ENCODE measurements at regions of chr15 and their contacts with region 1.

Region 1: DNA sequence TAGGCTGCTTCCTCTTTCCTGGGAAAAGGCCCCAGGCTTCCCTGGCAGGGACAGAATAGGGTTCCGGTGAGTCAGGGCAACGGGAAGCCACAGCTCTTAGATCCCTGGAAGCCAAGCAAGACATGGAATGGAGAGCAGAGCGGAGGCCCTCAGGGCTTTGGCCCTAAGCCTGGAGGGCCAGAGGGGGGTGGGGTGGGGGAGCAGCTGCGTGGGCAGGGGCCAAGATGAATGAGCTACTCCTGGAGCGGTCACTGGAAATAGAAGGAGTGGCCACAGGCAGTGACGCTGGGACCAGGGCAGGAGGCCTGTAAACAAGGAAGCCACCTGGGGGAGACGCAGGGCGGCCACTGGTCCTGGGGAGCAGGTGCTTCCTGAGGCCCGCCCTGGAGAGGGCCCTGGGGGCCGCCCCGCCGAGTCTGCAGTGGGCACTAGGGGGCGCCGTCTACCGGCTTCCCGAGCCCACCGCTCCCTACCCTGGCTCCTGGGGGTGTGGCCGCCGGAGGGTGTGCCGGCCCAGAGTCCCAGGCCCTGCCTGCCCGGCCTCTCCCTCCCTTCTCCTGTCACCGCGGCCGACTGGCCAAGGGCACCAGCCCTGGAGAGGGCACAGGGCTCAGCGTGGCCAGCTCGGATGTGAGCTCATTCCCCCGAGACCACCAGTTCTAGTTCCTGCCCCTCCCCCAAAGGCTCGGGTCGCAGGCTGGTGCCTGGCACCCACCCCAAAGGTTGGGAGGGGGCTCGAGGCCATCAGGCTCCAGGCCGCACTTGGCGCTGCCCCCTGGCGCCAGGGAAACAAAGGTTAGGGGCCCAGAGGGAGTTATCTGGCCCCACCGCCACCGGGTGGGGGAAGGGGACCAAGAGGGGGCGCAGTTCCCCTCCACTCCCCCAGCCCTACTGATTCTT is 12.1 kb downstream of the VPS18 start:
- DNase-seq: peak; percentile 91
- ATAC-seq: peak; percentile 81
- H3K4me3 Mint-ChIP-seq: peak overlapping the region; percentile 69
- H3K27ac Mint-ChIP-seq: peak overlapping the region; percentile 82
- H3K4me1 Mint-ChIP-seq: peaks cover 27% of the 10 kb centered on the region
- H3K27me3 Mint-ChIP-seq: no peaks in the 10 kb centered on the region

Region 2: GRCh38 chr15:40928821-40929659 is 22.7 kb after region 1 on chr15 and contains the start of gene DLL4:
- CTCF ChIA-PET with region 1: interaction called, 98 read pairs
- POLR2A ChIA-PET with region 1: no interaction called
- intact Hi-C with region 1: loop called in 1 of 2 experiments (anchors 2 kb)
- DNase-seq: peak; percentile 69
- ATAC-seq: peak; percentile 54
- H3K4me3 Mint-ChIP-seq: peak within 1 kb of the TSS; percentile 61
- H3K27ac Mint-ChIP-seq: no peak within 1 kb of the TSS
- H3K4me1 Mint-ChIP-seq: peaks cover 32% of the 10 kb centered on the region
- H3K27me3 Mint-ChIP-seq: peaks cover 58% of the 10 kb centered on the region
- total RNA-seq, gene DLL4: 0.18 to 0.30 TPM

Region 3: GRCh38 chr15:40952901-40953712 is 46.8 kb after region 1 on chr15 and contains the start of gene CHAC1:
- CTCF ChIA-PET with region 1: interaction called, 20 read pairs
- POLR2A ChIA-PET with region 1: no interaction called
- intact Hi-C with region 1: loop called (anchors 1 to 2 kb)
- DNase-seq: peak; percentile 99
- ATAC-seq: peak; percentile 92
- H3K4me3 Mint-ChIP-seq: peak within 1 kb of the TSS; percentile 93
- H3K27ac Mint-ChIP-seq: peak within 1 kb of the TSS; percentile 97
- H3K4me1 Mint-ChIP-seq: peaks cover 25% of the 10 kb centered on the region
- H3K27me3 Mint-ChIP-seq: peaks cover 2% of the 10 kb centered on the region
- total RNA-seq, gene CHAC1: 31.1 to 32.2 TPM

Region 4: GRCh38 chr15:41001524-41002214 is 95.3 kb after region 1 on chr15:
- CTCF ChIA-PET with region 1: interaction called, 6 read pairs
- POLR2A ChIA-PET with region 1: interaction called, 4 read pairs
- intact Hi-C with region 1: loop called in 1 of 2 experiments (anchors 5 kb)
- DNase-seq: no peak
- ATAC-seq: no peak
- H3K4me3 Mint-ChIP-seq: no peak overlapping the region
- H3K27ac Mint-ChIP-seq: no peak overlapping the region
- H3K4me1 Mint-ChIP-seq: no peaks in the 10 kb centered on the region
- H3K27me3 Mint-ChIP-seq: no peaks in the 10 kb centered on the region

Region 5: DNA sequence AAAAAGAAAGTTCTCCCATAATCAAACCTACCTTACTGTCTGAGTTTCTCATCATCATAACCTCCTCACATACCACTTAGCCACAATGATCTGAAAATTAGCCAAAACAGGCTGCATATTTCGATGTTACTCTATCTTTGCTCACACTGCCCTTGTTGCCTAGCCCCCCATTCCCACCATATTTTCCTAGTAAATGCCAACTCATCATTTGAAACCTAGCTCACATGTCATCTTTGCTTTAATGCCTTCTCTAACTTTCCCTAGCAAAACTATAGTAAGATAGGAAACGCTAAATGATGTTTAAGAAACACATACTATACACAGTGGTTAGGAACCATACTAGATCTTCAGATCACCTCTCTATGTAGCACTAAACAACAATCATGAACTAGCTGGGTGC is 144.8 kb after region 1 on chr15:
- CTCF ChIA-PET with region 1: no interaction called
- POLR2A ChIA-PET with region 1: no interaction called
- intact Hi-C with region 1: no loop called
- DNase-seq: no peak
- ATAC-seq: no peak
- H3K4me3 Mint-ChIP-seq: no peak overlapping the region
- H3K27ac Mint-ChIP-seq: no peak overlapping the region
- H3K4me1 Mint-ChIP-seq: no peaks in the 10 kb centered on the region
- H3K27me3 Mint-ChIP-seq: no peaks in the 10 kb centered on the region

Region 6: DNA sequence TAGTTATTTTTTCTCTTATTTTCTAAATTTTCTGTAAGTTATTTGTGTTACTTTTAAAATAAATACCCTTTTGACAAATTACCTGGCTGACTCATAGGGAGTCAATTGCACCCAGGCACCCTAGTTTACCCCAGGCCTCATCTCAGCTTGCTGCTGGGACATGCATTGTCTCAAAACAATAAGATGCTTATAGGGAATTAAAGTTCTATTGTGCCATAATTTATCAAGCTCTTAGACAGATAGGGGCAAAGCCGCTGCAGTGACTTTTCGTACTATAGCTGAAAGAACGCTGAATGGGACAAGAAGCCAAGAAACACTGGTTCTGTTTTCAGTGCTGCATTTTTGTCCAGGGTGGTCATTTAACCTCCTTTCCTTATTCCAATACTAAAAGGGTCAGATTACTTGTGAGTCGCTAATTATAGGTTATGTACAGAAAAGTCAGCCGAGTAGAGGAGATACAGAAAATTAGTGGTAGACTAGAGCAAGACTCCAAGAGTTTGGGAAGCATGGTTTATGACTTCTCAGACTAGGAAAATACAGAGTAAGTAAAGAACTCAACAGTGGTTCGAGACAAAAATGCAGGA is 274.0 kb after region 1 on chr15:
- CTCF ChIA-PET with region 1: interaction called, 55 read pairs
- POLR2A ChIA-PET with region 1: no interaction called
- intact Hi-C with region 1: loop called (anchors 1 kb)
- DNase-seq: no peak
- ATAC-seq: no peak
- H3K4me3 Mint-ChIP-seq: no peak overlapping the region
- H3K27ac Mint-ChIP-seq: no peak overlapping the region
- H3K4me1 Mint-ChIP-seq: no peaks in the 10 kb centered on the region
- H3K27me3 Mint-ChIP-seq: no peaks in the 10 kb centered on the region

Region 7: GRCh38 chr15:41331833-41332787 is 425.8 kb after region 1 on chr15 and contains the start of gene OIP5:
- CTCF ChIA-PET with region 1: interaction called, 3 read pairs
- POLR2A ChIA-PET with region 1: no interaction called
- intact Hi-C with region 1: loop called (anchors 1 to 10 kb)
- DNase-seq: peak; percentile 99
- ATAC-seq: peak; percentile 98
- H3K4me3 Mint-ChIP-seq: peak within 1 kb of the TSS; percentile 91
- H3K27ac Mint-ChIP-seq: peak within 1 kb of the TSS; percentile 92
- H3K4me1 Mint-ChIP-seq: peaks cover 26% of the 10 kb centered on the region
- H3K27me3 Mint-ChIP-seq: no peaks in the 10 kb centered on the region
- total RNA-seq, gene OIP5: 11.5 to 14.0 TPM

Measured in activated CD4-positive, alpha-beta T cell treated with anti-CD3 and anti-CD28 coated beads for 36 hours (primary cell).